ENCODE measurements at regions of chr13 and their contacts with region 1.

Region 1: GRCh38 chr13:26914624-26915023 is 154.0 kb upstream of the GPR12 start:
- DNase-seq: no peak
- ATAC-seq: no peak
- H3K4me3 ChIP-seq: no peak overlapping the region
- H3K4me3 Mint-ChIP-seq: no peak overlapping the region
- H3K27ac ChIP-seq: no peak overlapping the region
- H3K27ac Mint-ChIP-seq: no peak overlapping the region
- H3K4me1 ChIP-seq: no peaks in the 10 kb centered on the region
- H3K4me1 Mint-ChIP-seq: no peaks in the 10 kb centered on the region
- H3K27me3 ChIP-seq: peaks cover 0 to 11% (median 0%) of the 10 kb centered on the region in 4 experiments
- H3K27me3 Mint-ChIP-seq: peaks cover 21% of the 10 kb centered on the region
- CTCF ChIP-seq: no peak

Region 2: DNA sequence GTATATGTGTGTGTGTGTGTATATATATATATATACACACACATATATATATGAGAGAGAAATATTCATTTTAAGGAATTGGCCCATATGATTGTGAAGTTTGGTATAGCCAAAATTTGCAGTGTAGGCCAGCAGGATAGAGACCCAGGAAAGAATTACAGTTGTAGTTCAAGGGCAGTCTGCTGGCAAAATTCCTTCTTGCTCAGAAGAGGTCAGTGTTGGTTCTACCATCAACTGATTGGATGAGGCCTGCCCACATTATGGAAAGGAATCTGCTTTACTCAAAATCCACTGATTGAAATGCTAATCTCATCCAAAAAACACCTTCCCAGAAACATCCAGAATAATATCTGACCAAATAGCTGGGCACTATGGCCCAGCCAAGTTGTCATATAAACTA is 716.5 kb before region 1 on chr13:
- CTCF ChIA-PET with region 1: no interaction called
- POLR2A ChIA-PET with region 1: no interaction called
- intact Hi-C with region 1: no loop called
- DNase-seq: no peak
- ATAC-seq: no peak
- H3K4me3 ChIP-seq: no peak overlapping the region
- H3K4me3 Mint-ChIP-seq: no peak overlapping the region
- H3K27ac ChIP-seq: no peak overlapping the region
- H3K27ac Mint-ChIP-seq: no peak overlapping the region
- H3K4me1 ChIP-seq: no peaks in the 10 kb centered on the region
- H3K4me1 Mint-ChIP-seq: no peaks in the 10 kb centered on the region
- H3K27me3 ChIP-seq: no peaks in the 10 kb centered on the region
- H3K27me3 Mint-ChIP-seq: no peaks in the 10 kb centered on the region
- CTCF ChIP-seq: no peak

Region 3: DNA sequence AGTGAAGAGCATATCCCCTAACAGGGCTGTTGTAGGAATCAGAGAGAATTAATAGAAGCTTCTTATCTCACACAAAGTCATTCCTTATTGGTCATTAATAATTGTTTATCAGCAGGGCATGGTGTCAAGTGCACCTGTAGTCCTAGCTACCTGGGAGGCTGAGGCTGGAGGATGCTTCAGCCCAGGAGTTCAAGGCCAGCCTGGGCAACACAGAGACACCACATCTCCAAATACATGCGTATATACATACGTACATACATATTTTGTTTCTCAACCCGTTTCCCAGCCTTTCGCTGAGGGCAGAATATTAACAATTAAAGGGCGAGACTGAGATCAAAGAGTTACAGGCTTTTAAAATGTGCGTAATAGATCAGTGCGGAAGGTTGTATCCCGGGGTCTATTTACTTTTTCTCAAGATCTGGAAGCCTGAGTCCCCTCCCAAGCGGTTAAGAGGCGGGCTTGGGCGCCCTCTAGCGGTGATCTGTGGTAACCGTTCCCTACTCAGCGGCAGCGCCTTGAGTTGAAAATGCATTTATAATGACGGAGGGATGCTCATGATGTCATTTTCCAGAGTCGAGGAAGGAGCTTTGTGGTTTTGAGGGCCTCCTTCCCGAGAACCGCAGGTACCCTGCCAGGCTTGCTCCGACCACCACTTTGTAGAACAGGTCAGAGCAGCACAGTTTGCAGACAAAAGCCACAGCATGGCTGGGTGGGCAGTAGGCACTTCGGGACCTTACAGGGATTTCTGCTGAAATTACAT is 15.5 kb after region 1 on chr13:
- CTCF ChIA-PET with region 1: interaction called, 10 read pairs
- POLR2A ChIA-PET with region 1: no interaction called
- intact Hi-C with region 1: no loop called
- DNase-seq: peak; percentile 70
- ATAC-seq: peak; percentile 56
- H3K4me3 ChIP-seq: no peak overlapping the region
- H3K4me3 Mint-ChIP-seq: no peak overlapping the region
- H3K27ac ChIP-seq: no peak overlapping the region
- H3K27ac Mint-ChIP-seq: no peak overlapping the region
- H3K4me1 ChIP-seq: peaks cover 3% of the 10 kb centered on the region in 2 donors
- H3K4me1 Mint-ChIP-seq: peaks cover 6% of the 10 kb centered on the region
- H3K27me3 ChIP-seq: peaks cover 0 to 9% (median under 1%) of the 10 kb centered on the region in 4 experiments
- H3K27me3 Mint-ChIP-seq: peaks cover 17% of the 10 kb centered on the region
- CTCF ChIP-seq: peak; percentile 100

Measured in B cell (primary cell).